ENCODE measurements at regions of chr7 and their contacts with region 1.

Region 1: GRCh38 chr7:25093268-25093826 is 31.7 kb downstream of the CYCS start:
- DNase-seq: peak; percentile 78 to 92
- H3K4me3 ChIP-seq: peak overlapping the region; percentile 40
- H3K27ac ChIP-seq: no peak overlapping the region
- H3K4me1 ChIP-seq: peaks cover 16% of the 10 kb centered on the region; the same call in 1 of the 2 replicates
- H3K27me3 ChIP-seq: no peaks in the 10 kb centered on the region
- CTCF ChIP-seq: peak; percentile 97

Region 2: GRCh38 chr7:23863209-23863798 is 1230.0 kb before region 1 on chr7:
- CTCF ChIA-PET with region 1: no interaction called
- POLR2A ChIA-PET with region 1: no interaction called
- intact Hi-C with region 1: loop called (anchors 2 kb)
- DNase-seq: peak in 1 of 2 experiments; percentile 51
- H3K4me3 ChIP-seq: no peak overlapping the region
- H3K27ac ChIP-seq: no peak overlapping the region
- H3K4me1 ChIP-seq: peaks cover 22% of the 10 kb centered on the region
- H3K27me3 ChIP-seq: no peaks in the 10 kb centered on the region
- CTCF ChIP-seq: peak; percentile 98

Region 3: GRCh38 chr7:24572997-24573625 is 520.2 kb before region 1 on chr7 and contains the start of gene PALS2:
- CTCF ChIA-PET with region 1: interaction called, 4 read pairs
- POLR2A ChIA-PET with region 1: no interaction called
- intact Hi-C with region 1: loop called (anchors 1 kb)
- DNase-seq: peak; percentile 51 to 90
- H3K4me3 ChIP-seq: peak within 1 kb of the TSS; percentile 71
- H3K27ac ChIP-seq: peak within 1 kb of the TSS; percentile 46
- H3K4me1 ChIP-seq: peaks cover 24% of the 10 kb centered on the region
- H3K27me3 ChIP-seq: no peaks in the 10 kb centered on the region
- CTCF ChIP-seq: no peak
- total RNA-seq, gene PALS2: 35.8 and 42.4 TPM in 2 replicates

Region 4: DNA sequence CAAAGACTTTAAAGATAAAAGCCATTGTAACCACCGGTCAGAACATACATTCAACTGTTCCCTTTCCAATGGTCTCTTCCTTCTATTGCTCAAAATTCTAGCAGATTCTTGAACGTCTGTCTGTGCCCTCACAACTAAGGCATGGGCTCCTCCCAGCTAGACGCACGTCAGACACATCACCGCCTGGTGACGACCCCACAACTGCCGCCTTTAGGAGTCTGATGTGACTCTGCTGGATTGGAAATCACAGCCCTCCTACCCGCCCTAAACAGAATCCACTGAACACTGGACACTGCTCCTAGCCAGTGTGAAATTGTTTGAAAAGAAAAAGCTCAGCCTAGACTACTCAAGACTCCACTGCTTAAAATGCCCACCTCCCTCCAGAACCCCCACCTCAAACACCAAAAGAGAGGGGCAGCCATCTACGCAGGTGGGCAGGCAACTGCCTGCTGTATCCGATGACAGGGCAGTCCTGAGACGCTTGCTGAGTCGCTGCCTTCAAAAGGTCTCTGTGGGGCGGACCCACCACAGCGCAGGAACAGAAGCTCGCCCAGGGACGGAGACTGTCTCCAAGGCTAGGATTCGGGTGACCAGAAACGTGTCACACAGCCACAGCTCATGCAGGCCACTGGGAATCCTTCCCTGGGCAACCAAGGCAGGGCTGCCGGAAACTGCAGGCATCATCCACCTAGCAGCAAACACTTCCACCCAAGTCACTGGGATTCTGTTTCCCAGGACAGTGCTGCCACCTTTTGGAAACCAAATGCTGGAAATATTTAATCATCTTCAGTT is 370.8 kb before region 1 on chr7:
- CTCF ChIA-PET with region 1: no interaction called
- POLR2A ChIA-PET with region 1: no interaction called
- intact Hi-C with region 1: loop called (anchors 2 kb)
- DNase-seq: peak in 1 of 2 experiments; percentile 28
- H3K4me3 ChIP-seq: no peak overlapping the region
- H3K27ac ChIP-seq: peak overlapping the region; percentile 31; the same call in 1 of the 2 replicates
- H3K4me1 ChIP-seq: peaks cover 26% of the 10 kb centered on the region
- H3K27me3 ChIP-seq: no peaks in the 10 kb centered on the region
- CTCF ChIP-seq: peak; percentile 59

Region 5: DNA sequence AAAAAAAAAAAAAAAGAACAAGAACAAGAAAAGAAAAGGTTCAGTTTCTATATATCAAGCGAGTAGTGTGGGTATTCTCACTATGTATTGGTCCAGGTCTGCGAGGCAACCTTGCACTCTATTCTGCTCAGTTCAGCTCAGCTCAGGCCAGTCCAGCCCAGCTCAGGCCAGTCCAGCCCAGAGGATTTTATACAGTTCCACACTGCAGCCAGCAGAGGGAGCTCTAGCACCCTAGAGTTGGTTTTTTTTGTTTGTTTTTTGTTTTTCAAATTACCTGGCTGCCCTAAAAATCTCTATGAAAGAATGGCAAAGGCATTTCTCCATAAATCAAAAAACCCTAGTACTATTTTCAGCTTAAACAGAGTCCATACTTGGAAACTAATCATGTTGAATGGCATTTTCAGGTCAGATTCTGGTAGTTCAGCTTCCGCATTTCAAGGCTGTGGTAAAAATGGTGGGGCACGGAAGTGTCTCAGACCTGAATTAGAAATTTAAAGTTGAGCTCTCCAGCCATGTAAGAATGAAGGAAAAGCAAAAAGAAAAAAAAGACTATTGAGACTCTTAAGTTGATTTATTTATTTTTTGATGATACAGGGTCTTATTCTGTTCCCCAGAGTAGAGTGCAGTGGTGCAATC is 280.9 kb before region 1 on chr7:
- CTCF ChIA-PET with region 1: interaction called, 55 read pairs
- POLR2A ChIA-PET with region 1: no interaction called
- intact Hi-C with region 1: loop called (anchors 1 kb)
- DNase-seq: peak in 1 of 2 experiments; percentile 61
- H3K4me3 ChIP-seq: no peak overlapping the region
- H3K27ac ChIP-seq: no peak overlapping the region
- H3K4me1 ChIP-seq: no peaks in the 10 kb centered on the region
- H3K27me3 ChIP-seq: no peaks in the 10 kb centered on the region
- CTCF ChIP-seq: peak; percentile 99

Region 6: GRCh38 chr7:24979863-24980533 is 113.3 kb before region 1 on chr7 and contains the start of gene OSBPL3:
- CTCF ChIA-PET with region 1: interaction called, 7 read pairs
- POLR2A ChIA-PET with region 1: no interaction called
- intact Hi-C with region 1: loop called (anchors 1 kb)
- DNase-seq: peak; percentile 90 to 98
- H3K4me3 ChIP-seq: peak within 1 kb of the TSS; percentile 63
- H3K27ac ChIP-seq: peak within 1 kb of the TSS; percentile 77
- H3K4me1 ChIP-seq: peaks cover 24% of the 10 kb centered on the region
- H3K27me3 ChIP-seq: no peaks in the 10 kb centered on the region
- CTCF ChIP-seq: no peak
- total RNA-seq, gene OSBPL3: 87.6 and 88.4 TPM in 2 replicates

Region 7: GRCh38 chr7:25069900-25070443 is 23.4 kb before region 1 on chr7:
- CTCF ChIA-PET with region 1: interaction called, 9 read pairs
- POLR2A ChIA-PET with region 1: interaction called, 6 read pairs
- intact Hi-C with region 1: loop called (anchors 1 kb)
- DNase-seq: peak; percentile 67 to 76
- H3K4me3 ChIP-seq: no peak overlapping the region
- H3K27ac ChIP-seq: no peak overlapping the region
- H3K4me1 ChIP-seq: peaks cover 5% of the 10 kb centered on the region
- H3K27me3 ChIP-seq: no peaks in the 10 kb centered on the region
- CTCF ChIP-seq: peak; percentile 96